Activated naive CD4-positive, alpha-beta T cell treated with anti-CD3 and anti-CD28 coated beads for 36 hours (primary cell): ENCODE measurements at regions of chr4 and their contacts with region 1.

Region 1: DNA sequence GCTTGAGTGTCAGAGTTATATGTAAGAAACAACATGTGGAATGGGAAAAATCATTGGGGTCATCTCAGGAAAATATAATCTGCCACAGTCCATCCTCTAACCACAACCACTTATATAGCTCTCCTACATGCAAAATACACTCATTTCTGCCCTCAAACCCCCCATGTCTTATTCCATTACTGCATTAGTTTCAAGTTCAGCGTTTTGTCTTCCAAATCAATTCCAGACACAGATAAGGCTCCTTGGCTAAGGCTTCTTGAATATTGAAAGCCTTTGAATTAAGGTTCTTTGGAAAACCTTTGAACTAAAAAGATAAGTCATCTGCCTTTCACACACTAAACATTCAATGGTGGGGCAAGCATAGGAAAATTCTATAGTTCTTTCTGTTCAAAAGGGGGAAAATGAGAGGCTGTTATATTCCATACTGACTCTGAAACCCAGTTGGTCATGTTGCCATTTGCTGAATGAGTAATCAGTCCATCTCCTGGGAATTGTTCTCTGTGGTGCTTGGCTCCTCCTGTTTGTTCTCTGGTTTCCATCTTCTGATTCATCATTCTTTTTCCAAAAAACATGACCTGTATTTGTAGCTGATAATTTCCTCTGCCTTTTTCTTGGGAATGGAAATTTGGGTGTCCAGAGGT is 218.7 kb downstream of the BMPR1B start:
- DNase-seq: no peak
- H3K4me3 Mint-ChIP-seq: no peak overlapping the region
- H3K27ac Mint-ChIP-seq: no peak overlapping the region
- H3K4me1 Mint-ChIP-seq: no peaks in the 10 kb centered on the region
- H3K27me3 Mint-ChIP-seq: no peaks in the 10 kb centered on the region

Region 2: DNA sequence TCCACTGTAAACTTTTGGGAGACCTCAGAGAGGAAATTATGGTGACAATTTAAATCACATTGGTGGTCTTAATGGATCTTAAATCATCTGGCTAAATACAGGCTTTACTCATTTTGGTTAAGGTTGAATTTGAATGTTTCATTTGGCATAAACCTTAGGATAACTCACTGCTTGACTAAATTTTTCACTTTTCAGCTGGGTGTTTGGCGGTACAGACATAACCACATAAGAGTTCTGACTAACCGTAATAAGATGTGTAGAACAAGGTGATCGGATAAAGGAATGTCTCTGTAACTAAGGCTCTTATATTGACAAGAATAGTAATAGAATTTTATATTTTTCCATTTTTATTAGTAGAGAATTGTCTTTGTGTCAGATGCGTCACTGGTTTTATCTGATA is 62.3 kb after region 1 on chr4:
- CTCF ChIA-PET with region 1: no interaction called
- intact Hi-C with region 1: loop called (anchors 10 kb)
- DNase-seq: no peak
- H3K4me3 Mint-ChIP-seq: no peak overlapping the region
- H3K27ac Mint-ChIP-seq: no peak overlapping the region
- H3K4me1 Mint-ChIP-seq: no peaks in the 10 kb centered on the region
- H3K27me3 Mint-ChIP-seq: peaks cover 7% of the 10 kb centered on the region